ENCODE measurements at regions of chr19 and their contacts with region 1.

Region 1: DNA sequence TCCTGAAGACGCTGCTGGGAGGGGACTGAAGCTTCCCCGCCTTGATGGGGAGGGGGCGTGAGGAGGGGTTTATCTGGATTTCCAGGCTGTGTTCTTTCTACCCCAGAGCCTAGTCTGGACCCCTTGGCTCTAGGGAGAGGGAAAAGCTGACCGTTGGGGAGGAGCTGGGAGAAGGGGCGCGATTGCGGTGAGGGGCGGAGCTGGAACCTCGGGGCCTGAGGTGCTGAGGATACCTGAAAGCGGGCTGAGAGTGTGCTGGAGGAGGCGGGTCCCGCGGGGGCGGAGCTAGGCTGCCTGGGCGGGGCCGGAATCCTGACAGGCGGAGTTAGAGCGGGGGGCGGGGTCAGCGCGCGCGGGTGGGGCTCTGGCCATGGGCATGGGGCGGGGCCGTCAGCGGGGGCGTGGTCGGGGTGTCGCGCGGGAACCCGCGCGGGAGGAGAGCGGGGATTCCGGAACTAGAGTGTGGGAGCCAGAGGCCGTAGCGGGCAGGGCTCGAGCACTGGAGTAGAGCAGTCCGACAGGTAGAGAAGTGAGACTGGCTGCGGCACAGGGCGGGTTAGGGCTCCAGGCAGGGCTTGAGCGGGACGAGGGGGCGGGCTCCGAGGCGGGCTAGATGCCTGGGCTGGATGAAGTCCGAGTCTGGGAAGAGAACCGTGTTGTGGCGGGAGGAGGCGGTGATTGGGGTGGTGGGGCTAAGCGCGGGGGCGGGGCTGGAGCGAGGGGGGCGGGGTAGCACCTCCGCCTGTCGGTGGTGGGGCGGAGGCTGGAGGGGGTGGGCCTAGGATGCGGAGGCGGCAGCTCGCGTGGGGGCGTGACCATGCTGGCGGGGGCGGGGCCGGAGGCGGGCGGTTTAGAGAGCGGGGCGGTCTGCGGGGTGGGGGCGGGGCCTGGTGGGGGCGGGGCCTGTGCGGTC is at the start of gene INAFM1:
- DNase-seq: peak; percentile 97 to 98
- ATAC-seq: peak; percentile 82 to 91 (median 86)
- H3K4me3 ChIP-seq: peak within 1 kb of the TSS; percentile 62
- H3K27ac ChIP-seq: peak within 1 kb of the TSS; percentile 85
- H3K4me1 ChIP-seq: peaks cover 8% of the 10 kb centered on the region
- H3K27me3 ChIP-seq: no peaks in the 10 kb centered on the region
- CTCF ChIP-seq: no peak
- total RNA-seq, gene INAFM1: 13.6 to 18.9 (median 15.8) TPM

Region 2: GRCh38 chr19:47256688-47257443 is 17.4 kb before region 1 on chr19:
- intact Hi-C with region 1: loop called in 1 of 2 experiments (anchors 1 kb)
- DNase-seq: peak; percentile 100
- ATAC-seq: peak; percentile 82 to 86 (median 85)
- H3K4me3 ChIP-seq: peak overlapping the region; percentile 68
- H3K27ac ChIP-seq: peak overlapping the region; percentile 89
- H3K4me1 ChIP-seq: peaks cover 30% of the 10 kb centered on the region
- H3K27me3 ChIP-seq: no peaks in the 10 kb centered on the region
- CTCF ChIP-seq: no peak

Region 3: GRCh38 chr19:47315125-47315821 is 41.0 kb after region 1 on chr19:
- intact Hi-C with region 1: no loop called
- DNase-seq: peak in 1 of 2 donors; percentile 62
- ATAC-seq: peak; percentile 67 to 84 (median 78)
- H3K4me3 ChIP-seq: no peak overlapping the region
- H3K27ac ChIP-seq: no peak overlapping the region
- H3K4me1 ChIP-seq: no peaks in the 10 kb centered on the region
- H3K27me3 ChIP-seq: peaks cover 0 to 40% (median 3%) of the 10 kb centered on the region in 3 donors
- CTCF ChIP-seq: no peak